ENCODE measurements at regions of chr10 and their contacts with region 1.

Region 1: DNA sequence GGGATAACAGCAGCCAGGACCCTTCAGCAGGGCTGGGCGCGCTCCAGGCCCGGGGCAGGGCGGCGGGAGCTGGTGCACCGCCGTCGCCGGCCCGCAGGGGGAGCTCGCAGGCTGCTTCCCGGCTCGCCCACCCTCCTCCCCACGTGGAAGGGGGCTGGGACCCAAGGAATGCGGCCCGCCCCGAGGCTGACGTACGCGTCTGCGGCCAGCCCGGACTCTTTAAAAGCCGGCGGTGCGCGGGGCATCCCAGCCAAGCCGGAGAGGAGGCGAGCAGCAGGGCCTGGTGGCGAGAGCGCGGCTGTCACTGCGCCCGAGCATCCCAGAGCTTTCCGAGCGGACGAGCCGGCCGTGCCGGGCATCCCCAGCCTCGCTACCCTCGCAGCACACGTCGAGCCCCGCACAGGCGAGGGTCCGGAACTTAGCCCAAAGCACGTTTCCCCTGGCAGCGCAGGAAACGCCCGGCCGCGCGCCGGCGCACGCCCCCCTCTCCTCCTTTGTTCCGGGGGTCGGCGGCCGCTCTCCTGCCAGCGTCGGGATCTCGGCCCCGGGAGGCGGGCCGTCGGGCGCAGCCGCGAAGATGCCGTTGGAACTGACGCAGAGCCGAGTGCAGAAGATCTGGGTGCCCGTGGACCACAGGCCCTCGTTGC is at the start of gene PFKFB3:
- DNase-seq: peak; percentile 85
- ATAC-seq: peak; percentile 68
- H3K4me3 ChIP-seq: peak within 1 kb of the TSS; percentile 89
- H3K27ac ChIP-seq: peak within 1 kb of the TSS; percentile 26
- H3K4me1 ChIP-seq: peaks cover 19% of the 10 kb centered on the region
- H3K27me3 ChIP-seq: no peaks in the 10 kb centered on the region
- CTCF ChIP-seq: peak; percentile 64
- total RNA-seq, gene PFKFB3: 19.5 and 22.7 TPM in 2 replicates

Region 2: DNA sequence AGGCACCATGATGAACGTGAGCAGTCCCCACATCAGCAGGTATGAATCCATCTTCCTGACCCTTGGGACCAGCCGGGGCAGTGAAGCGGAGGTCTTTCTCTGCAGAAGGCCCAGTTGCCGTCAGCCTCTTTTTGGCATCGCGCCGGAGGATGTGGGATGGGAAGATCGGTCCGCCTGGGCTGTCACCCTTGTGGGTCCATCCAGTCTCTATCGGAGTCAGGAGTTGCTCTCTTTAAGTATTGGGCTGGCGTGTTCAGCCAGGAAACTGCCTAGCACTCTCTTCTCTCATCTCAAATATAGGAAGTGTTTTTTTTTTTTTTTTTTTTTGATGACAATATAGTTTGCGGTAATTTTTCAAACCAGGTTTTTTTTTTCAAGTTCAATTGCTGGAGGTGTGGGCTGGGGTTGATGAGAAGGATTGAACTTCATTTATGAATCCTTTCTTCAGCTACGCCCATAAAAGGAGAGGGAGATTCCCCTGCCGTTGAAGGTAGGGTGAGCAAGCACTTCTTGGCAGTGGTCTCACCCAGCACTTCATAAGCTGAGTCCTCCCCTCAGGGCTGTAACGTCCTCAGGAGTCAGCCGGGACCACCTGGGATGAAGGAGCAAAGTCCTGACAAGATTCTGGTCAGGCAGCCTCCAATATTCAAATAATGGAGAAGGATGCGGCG is 140.6 kb before region 1 on chr10 and contains the start of gene IL2RA:
- CTCF ChIA-PET with region 1: no interaction called
- POLR2A ChIA-PET with region 1: no interaction called
- intact Hi-C with region 1: no loop called
- DNase-seq: no peak
- ATAC-seq: no peak
- H3K4me3 ChIP-seq: no peak within 1 kb of the TSS
- H3K27ac ChIP-seq: no peak within 1 kb of the TSS
- H3K4me1 ChIP-seq: no peaks in the 10 kb centered on the region
- H3K27me3 ChIP-seq: peaks cover 4% of the 10 kb centered on the region; the same call in 1 of the 2 replicates
- CTCF ChIP-seq: no peak
- total RNA-seq, gene IL2RA: not detected in 2 replicates

Region 3: GRCh38 chr10:6108603-6109443 is 94.0 kb before region 1 on chr10:
- CTCF ChIA-PET with region 1: interaction called, 4 read pairs
- POLR2A ChIA-PET with region 1: interaction called, 3 read pairs
- intact Hi-C with region 1: loop called (anchors 1 kb)
- DNase-seq: peak; percentile 44
- ATAC-seq: peak; percentile 29; the same call in 1 of the 2 replicates
- H3K4me3 ChIP-seq: no peak overlapping the region
- H3K27ac ChIP-seq: no peak overlapping the region
- H3K4me1 ChIP-seq: peaks cover 27% of the 10 kb centered on the region
- H3K27me3 ChIP-seq: no peaks in the 10 kb centered on the region
- CTCF ChIP-seq: peak; percentile 63

Region 4: DNA sequence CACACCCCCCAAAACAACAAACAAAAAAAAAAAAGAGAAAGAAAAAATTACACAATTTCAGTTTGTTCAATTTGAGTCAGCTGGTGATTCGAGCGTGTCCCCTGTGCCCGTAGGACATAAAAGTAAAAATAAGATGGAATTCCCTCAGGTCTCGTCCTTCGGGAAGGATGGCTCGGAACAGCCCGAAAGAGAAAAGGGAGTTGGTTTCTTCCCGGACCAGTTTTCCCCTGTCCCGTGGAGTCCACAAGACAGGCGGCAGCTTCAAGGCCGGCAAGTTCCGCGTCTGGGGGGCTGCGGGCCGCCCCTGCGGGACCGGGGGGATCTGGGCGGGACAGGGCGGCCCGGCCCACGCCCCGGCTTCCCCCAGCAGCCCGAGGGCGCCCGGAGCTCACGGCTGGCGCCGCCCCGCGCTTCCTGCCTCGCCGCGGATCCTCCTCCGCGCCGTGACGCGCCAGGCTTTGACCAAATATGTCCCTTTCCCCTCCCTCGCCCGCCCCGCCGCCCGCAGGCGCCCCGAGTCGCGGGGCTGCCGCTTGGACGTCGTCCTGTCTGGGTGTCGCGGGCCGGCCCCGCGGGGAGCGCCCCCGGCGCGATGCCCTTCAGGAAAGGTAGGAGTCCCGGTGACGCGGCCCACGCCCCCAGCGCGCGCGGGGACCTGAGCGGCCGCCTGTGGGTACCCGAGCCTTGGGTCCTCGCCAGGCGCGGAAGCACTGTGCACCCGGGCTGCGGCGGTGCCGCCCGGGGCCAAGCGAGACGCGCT is 58.2 kb before region 1 on chr10:
- CTCF ChIA-PET with region 1: no interaction called
- POLR2A ChIA-PET with region 1: no interaction called
- intact Hi-C with region 1: loop called (anchors 5 kb)
- DNase-seq: peak; percentile 70
- ATAC-seq: peak; percentile 68
- H3K4me3 ChIP-seq: peak overlapping the region; percentile 75
- H3K27ac ChIP-seq: no peak overlapping the region
- H3K4me1 ChIP-seq: peaks cover 6% of the 10 kb centered on the region; the same call in 1 of the 2 replicates
- H3K27me3 ChIP-seq: no peaks in the 10 kb centered on the region
- CTCF ChIP-seq: no peak

Region 5: GRCh38 chr10:6239213-6239991 is 36.6 kb after region 1 on chr10:
- CTCF ChIA-PET with region 1: no interaction called
- POLR2A ChIA-PET with region 1: no interaction called
- intact Hi-C with region 1: loop called (anchors 2 kb)
- DNase-seq: peak; percentile 94
- ATAC-seq: peak; percentile 94
- H3K4me3 ChIP-seq: no peak overlapping the region
- H3K27ac ChIP-seq: peak overlapping the region; percentile 57
- H3K4me1 ChIP-seq: peaks cover 8% of the 10 kb centered on the region; the same call in 1 of the 2 replicates
- H3K27me3 ChIP-seq: no peaks in the 10 kb centered on the region
- CTCF ChIP-seq: no peak

Region 6: DNA sequence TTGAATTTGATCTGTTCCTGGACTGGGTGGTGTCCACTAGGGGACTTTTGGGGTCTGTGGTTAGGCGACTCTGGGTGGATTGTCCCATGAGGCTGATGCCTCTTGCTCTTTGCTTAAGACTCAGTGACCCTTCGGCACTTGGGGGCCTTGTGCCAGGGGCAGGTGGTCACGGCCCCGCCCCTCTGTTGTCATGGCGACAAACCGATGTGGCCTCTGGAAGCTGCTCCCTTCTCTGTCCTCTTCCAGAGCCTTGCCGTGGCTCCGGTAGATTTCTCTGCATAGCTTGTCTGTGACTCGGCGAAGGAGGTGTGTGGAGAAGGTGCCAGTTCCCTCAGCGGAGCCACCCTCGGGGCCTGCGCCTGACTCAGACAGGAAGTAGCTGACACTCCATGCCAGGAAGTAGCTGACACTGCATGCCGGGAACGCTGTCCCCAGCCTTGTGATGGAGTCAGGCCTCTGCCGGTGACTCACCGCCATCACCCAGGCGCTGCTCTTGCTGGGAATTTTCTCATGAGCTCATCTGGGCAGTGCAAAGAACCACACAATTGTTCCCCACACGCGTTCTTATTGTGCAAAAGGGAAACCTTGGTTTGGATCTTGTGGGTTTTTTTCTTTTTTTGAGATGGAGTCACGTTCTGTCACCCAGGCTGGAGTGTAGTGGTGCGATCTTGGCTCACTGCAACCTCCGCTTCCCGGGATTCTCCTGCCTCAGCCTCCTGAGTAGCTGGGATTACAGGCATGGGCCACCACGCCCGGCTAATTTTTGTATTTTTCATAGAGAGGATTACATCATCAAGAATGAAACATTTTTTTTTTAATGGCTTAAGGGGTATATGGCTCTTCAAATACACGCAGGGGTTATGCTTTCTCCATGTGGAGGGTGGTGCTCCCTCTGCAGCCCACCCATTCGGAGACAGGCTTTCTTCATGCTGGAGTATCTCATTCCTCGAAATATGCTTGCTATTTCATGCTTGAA is 72.5 kb after region 1 on chr10:
- CTCF ChIA-PET with region 1: interaction called, 9 read pairs
- POLR2A ChIA-PET with region 1: interaction called, 3 read pairs
- intact Hi-C with region 1: loop called (anchors 5 kb)
- DNase-seq: peak; percentile 89
- ATAC-seq: peak; percentile 98
- H3K4me3 ChIP-seq: peak overlapping the region; percentile 50; the same call in 1 of the 2 replicates
- H3K27ac ChIP-seq: peak overlapping the region; percentile 87
- H3K4me1 ChIP-seq: peaks cover 15% of the 10 kb centered on the region
- H3K27me3 ChIP-seq: no peaks in the 10 kb centered on the region
- CTCF ChIP-seq: no peak

Region 7: GRCh38 chr10:6401562-6402348 is 198.9 kb after region 1 on chr10:
- CTCF ChIA-PET with region 1: interaction called, 51 read pairs
- POLR2A ChIA-PET with region 1: interaction called, 3 read pairs
- intact Hi-C with region 1: loop called (anchors 1 kb)
- DNase-seq: peak; percentile 81
- ATAC-seq: peak; percentile 94
- H3K4me3 ChIP-seq: peak overlapping the region; percentile 68
- H3K27ac ChIP-seq: peak overlapping the region; percentile 61
- H3K4me1 ChIP-seq: peaks cover 5% of the 10 kb centered on the region
- H3K27me3 ChIP-seq: no peaks in the 10 kb centered on the region
- CTCF ChIP-seq: peak; percentile 62